ENCODE measurements at regions of chr5 and their contacts with region 1.

Region 1: GRCh38 chr5:132227485-132228240 is at the start of gene P4HA2:
- DNase-seq: peak; percentile 77
- H3K4me3 ChIP-seq: peak within 1 kb of the TSS; percentile 51 to 72 (median 67)
- H3K27ac ChIP-seq: peak within 1 kb of the TSS; percentile 65
- H3K4me1 ChIP-seq: peaks cover 42% of the 10 kb centered on the region
- H3K27me3 ChIP-seq: no peaks in the 10 kb centered on the region
- CTCF ChIP-seq: peak in 1 of 2 donors; percentile 22
- total RNA-seq, gene P4HA2: 103 to 142 TPM

Region 2: DNA sequence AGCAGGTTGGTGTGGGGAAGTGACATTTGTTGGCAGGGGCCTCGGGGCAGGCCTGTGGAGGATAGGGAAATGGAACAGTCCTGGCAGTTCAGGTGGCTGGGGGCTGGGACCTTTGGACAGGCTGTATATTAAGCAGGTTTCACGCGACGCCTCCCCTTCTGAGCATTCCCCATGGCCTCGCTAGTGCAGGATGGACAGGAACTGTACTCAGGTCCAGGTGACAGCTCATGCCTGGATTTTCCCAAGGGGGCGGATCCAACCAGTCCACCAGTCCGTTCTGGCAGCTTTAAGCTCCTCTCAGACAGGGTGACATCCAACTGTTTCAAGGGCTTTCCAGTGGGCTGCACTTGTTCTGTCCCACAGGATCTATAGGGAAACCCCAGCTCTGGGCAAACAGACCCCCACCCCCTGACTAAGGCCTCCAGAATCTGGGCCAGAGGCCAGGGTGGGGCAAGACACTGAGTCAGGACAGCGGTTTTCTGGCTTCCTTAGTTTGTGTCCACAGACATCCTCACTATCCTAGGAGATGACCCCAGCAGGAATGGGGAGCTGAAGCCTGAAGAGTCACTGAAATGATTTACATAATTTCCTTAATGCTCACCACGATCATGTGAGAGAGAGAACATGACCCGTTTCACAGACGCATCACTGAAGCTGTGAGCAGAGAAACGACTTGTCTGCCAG is 133.1 kb before region 1 on chr5:
- CTCF ChIA-PET with region 1: no interaction called
- dilution Hi-C with region 1: no loop called
- in situ Hi-C with region 1: no loop called
- intact Hi-C with region 1: no loop called
- DNase-seq: peak; percentile 99
- H3K4me3 ChIP-seq: no peak overlapping the region
- H3K27ac ChIP-seq: peak overlapping the region; percentile 91
- H3K4me1 ChIP-seq: peaks cover 45% of the 10 kb centered on the region
- H3K27me3 ChIP-seq: no peaks in the 10 kb centered on the region
- CTCF ChIP-seq: no peak

Region 3: DNA sequence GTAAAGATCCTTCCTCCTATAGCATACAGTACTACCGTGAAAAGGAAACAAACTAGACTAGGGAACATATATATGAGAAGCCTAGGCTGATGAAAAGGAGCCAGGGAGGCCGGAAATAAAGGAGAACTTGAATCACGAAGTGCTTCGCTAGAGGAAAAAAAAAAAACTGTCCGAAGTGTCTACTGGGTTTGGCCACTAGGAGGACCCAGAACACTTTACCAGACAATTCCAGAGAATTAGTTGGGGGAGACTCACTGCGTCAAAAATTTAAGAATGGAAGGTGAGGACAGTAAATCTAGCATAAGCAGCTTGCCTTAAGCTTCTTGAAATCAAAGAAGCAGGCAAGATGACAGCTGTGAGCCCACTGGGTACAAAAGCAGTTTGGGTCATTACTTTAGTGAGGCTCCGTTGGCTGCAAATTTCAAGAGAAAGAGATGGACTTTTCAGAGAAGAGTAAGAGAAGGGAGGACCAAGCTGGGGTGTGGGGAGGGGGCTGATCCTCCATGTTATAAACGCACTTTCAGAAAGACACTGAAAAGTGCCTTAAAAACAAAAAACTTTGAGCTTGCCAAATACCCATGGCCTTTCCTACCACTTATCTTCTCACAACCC is 47.4 kb before region 1 on chr5:
- CTCF ChIA-PET with region 1: no interaction called
- dilution Hi-C with region 1: no loop called
- in situ Hi-C with region 1: no loop called
- intact Hi-C with region 1: loop called (anchors 2 kb)
- DNase-seq: peak; percentile 63
- H3K4me3 ChIP-seq: no peak overlapping the region
- H3K27ac ChIP-seq: no peak overlapping the region
- H3K4me1 ChIP-seq: peaks cover 22% of the 10 kb centered on the region
- H3K27me3 ChIP-seq: no peaks in the 10 kb centered on the region
- CTCF ChIP-seq: peak; percentile 79 to 87

Region 4: GRCh38 chr5:132190161-132190817 is 37.4 kb before region 1 on chr5:
- CTCF ChIA-PET with region 1: no interaction called
- dilution Hi-C with region 1: no loop called
- in situ Hi-C with region 1: no loop called
- intact Hi-C with region 1: loop called (anchors 1 kb)
- DNase-seq: peak; percentile 55
- H3K4me3 ChIP-seq: no peak overlapping the region
- H3K27ac ChIP-seq: no peak overlapping the region
- H3K4me1 ChIP-seq: no peaks in the 10 kb centered on the region
- H3K27me3 ChIP-seq: no peaks in the 10 kb centered on the region
- CTCF ChIP-seq: peak; percentile 72 to 85

Region 5: DNA sequence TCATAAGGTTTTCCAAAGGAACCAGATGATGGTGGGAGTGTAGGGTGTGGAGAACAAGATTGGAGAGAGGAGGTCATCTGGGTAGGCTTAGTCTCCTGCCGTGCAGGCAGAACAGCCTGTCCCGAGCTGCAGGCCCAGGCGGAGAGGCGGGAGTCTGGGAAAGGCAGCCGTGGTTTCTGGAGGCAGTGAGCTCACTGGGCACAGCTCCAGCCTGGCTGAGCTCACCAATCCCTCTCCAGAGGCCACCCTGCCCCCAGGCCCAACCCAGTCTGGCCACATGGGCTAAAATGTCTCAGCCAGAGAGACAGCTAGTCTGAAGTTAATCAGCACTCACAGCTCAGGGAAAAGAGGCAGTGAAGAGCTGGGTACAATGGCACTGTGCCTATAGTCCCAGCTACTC is 12.3 kb before region 1 on chr5:
- CTCF ChIA-PET with region 1: interaction called, 13 read pairs
- dilution Hi-C with region 1: no loop called
- in situ Hi-C with region 1: no loop called
- intact Hi-C with region 1: no loop called
- DNase-seq: peak; percentile 98
- H3K4me3 ChIP-seq: no peak overlapping the region
- H3K27ac ChIP-seq: peak overlapping the region; percentile 61
- H3K4me1 ChIP-seq: peaks cover 19% of the 10 kb centered on the region
- H3K27me3 ChIP-seq: no peaks in the 10 kb centered on the region
- CTCF ChIP-seq: no peak

Region 6: DNA sequence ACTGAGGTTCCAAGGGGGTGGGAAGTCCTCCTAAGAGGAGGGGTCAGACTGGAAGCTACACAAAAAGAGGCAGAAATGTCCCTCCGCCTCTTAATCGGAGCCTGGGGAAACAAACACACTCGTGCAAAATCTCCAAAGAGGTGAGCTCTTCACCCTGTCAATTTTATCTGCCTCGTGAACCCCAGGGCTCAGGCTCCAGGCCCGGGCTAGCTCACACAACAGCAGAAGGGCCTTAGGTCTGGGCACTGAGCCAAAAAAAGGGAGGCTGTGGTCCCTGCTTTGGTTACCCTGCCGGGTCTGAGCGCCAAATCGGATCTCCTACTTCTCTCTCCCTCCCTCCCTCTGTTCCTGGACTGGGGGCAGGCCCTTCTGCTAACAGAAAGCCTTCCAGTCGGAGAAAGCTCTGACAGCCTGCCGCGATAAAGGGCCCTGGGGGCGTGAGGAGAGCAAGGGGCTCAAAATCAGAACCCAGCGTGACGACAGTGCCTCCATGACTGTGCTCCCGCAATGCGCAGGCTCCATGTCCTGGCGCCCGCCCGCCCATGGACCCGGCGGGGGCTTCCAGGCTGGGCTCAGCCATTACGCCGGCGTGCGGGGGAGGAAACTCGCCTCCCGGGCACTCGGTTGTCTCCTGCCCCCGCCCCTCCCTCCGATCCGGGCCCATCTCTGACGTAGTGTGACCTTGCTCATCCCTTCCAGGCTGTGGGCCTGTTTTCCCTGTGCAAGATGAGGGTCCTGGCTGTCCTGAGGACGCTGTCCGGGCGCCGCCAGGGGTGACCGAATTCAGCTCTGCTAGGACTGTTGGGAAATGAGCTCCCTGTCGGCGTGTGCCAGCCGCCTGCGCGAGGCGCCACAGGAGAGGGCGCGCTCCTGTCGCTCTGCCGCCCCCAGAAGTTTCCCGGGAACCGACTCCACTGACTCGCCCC is 65.7 kb after region 1 on chr5:
- CTCF ChIA-PET with region 1: no interaction called
- dilution Hi-C with region 1: loop called (anchors 5 kb)
- in situ Hi-C with region 1: no loop called
- intact Hi-C with region 1: loop called (anchors 2 kb)
- DNase-seq: peak; percentile 81
- H3K4me3 ChIP-seq: peak overlapping the region; percentile 55 to 66 (median 60)
- H3K27ac ChIP-seq: peak overlapping the region; percentile 84
- H3K4me1 ChIP-seq: peaks cover 27% of the 10 kb centered on the region
- H3K27me3 ChIP-seq: no peaks in the 10 kb centered on the region
- CTCF ChIP-seq: peak in 1 of 2 donors; percentile 24

Region 7: DNA sequence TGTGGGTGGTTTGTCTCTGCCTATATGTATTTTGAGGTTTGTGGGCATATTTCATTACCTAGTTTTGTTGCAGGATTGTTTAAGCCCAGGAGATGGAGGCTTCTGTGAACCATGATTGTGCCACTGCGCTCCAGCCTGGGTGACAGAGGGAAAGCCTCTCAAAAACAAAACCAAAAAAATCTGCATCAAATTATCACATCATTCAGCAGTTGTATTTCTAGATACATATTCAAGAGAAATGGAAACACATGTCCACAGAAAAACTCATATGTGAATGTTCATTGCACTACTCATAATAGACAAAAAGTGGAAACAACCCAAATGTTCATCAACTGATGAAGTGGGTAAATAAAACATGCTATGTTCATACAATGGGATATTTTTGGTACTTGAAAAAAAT is 854.0 kb after region 1 on chr5:
- CTCF ChIA-PET with region 1: no interaction called
- dilution Hi-C with region 1: no loop called
- in situ Hi-C with region 1: no loop called
- intact Hi-C with region 1: no loop called
- DNase-seq: no peak
- H3K4me3 ChIP-seq: no peak overlapping the region
- H3K27ac ChIP-seq: no peak overlapping the region
- H3K4me1 ChIP-seq: no peaks in the 10 kb centered on the region
- H3K27me3 ChIP-seq: no peaks in the 10 kb centered on the region
- CTCF ChIP-seq: no peak